Common myeloid progenitor, CD34-positive (primary cell): ENCODE measurements at regions of chr18 and their contacts with region 1.

Region 1: DNA sequence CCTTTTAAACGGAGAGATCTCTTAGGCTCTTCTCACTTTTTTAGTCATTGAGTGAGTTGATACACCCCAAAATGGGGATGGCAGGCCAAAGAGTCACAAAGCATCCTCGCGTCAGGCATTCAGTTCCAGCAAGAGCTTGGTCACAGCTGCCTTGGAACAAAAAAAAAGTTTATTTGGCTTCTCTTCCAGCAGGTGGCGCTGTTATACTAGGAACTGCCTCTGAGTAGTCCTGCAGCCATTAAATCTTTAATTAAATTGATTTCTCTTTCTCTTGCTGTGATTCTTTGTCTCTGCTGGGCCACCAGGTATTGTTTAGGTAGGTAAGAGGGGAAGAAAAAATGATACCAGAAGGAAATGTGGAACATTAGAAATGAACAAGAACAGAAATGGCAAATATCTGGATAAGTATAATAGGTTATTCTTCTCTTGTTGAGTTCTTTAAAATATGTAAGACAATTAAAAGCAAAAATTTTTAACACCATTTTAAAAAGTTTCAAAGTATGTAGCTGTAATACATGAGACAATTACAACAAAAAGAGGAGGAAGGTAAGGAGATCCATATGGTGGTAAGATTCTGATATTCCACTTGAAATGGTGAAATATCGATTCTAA is 175.1 kb downstream of the GALNT1 start:
- DNase-seq: peak; percentile 49 to 77 (median 71)
- H3K4me3 ChIP-seq: no peak overlapping the region
- H3K27ac ChIP-seq: no peak overlapping the region
- H3K4me1 ChIP-seq: no peaks in the 10 kb centered on the region
- H3K27me3 ChIP-seq: no peaks in the 10 kb centered on the region

Region 2: GRCh38 chr18:35580701-35581539 is 175.7 kb before region 1 on chr18:
- CTCF ChIA-PET with region 1: no interaction called
- POLR2A ChIA-PET with region 1: no interaction called
- DNase-seq: peak; percentile 73 to 89 (median 83)
- H3K4me3 ChIP-seq: peak overlapping the region; percentile 67 to 84 (median 79)
- H3K27ac ChIP-seq: peak overlapping the region; percentile 56 to 89
- H3K4me1 ChIP-seq: peaks cover 6 to 22% (median 15%) of the 10 kb centered on the region in 4 experiments
- H3K27me3 ChIP-seq: no peaks in the 10 kb centered on the region

Region 3: DNA sequence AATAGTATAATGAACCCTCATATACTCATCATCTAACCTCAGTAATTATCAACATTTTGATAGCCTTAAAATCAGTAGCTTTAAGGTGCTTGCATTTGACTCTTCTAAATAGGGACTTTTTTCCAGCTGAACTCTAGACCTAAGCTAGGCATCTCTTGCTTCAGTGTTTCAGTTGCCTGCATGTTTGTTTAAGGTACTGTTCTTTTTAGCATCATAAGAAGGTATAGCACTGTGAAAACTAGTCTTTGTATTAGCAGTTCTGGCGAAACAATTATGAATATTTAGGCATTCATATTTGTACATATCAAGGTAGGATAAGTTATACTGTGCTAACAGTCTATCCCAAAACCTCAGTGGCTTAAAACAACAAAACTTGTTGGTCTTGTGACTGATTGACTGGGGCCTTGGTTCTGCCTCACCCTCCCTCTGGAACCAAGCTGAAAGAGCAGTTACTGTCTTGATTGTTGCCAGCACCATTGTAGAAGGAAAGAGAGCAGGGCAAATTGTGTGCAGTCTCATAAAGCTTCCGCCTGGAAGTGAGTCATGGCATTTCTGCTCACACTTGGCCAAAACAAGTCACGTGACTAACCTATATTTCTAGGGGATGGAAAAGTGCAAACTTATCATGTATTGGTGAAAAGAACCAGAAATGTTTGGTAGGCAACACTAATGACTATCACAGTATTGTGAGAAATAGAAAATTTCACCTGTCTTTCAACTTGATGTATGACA is 150.8 kb before region 1 on chr18:
- CTCF ChIA-PET with region 1: no interaction called
- POLR2A ChIA-PET with region 1: no interaction called
- DNase-seq: peak in 2 of 3 donors; percentile 28 to 45
- H3K4me3 ChIP-seq: no peak overlapping the region
- H3K27ac ChIP-seq: no peak overlapping the region
- H3K4me1 ChIP-seq: peaks cover 0 to 10% (median 4%) of the 10 kb centered on the region in 4 experiments
- H3K27me3 ChIP-seq: no peaks in the 10 kb centered on the region

Region 4: GRCh38 chr18:35949903-35950627 is 193.5 kb after region 1 on chr18:
- CTCF ChIA-PET with region 1: interaction called, 12 read pairs
- POLR2A ChIA-PET with region 1: no interaction called
- DNase-seq: peak; percentile 79 to 88 (median 87)
- H3K4me3 ChIP-seq: peak overlapping the region; percentile 47 to 86 (median 69)
- H3K27ac ChIP-seq: no peak overlapping the region
- H3K4me1 ChIP-seq: peaks cover 4 to 6% (median 4%) of the 10 kb centered on the region in 4 experiments
- H3K27me3 ChIP-seq: peaks cover 0 to 14% (median 0%) of the 10 kb centered on the region in 5 experiments

Region 5: GRCh38 chr18:36309436-36310391 is 553.1 kb after region 1 on chr18:
- CTCF ChIA-PET with region 1: no interaction called
- POLR2A ChIA-PET with region 1: no interaction called
- DNase-seq: no peak
- H3K4me3 ChIP-seq: no peak overlapping the region
- H3K27ac ChIP-seq: no peak overlapping the region
- H3K4me1 ChIP-seq: no peaks in the 10 kb centered on the region
- H3K27me3 ChIP-seq: peaks cover 0 to 68% (median 16%) of the 10 kb centered on the region in 5 experiments